T-cell (primary cell): ENCODE measurements at regions of chr16 and their contacts with region 1.

Region 1: DNA sequence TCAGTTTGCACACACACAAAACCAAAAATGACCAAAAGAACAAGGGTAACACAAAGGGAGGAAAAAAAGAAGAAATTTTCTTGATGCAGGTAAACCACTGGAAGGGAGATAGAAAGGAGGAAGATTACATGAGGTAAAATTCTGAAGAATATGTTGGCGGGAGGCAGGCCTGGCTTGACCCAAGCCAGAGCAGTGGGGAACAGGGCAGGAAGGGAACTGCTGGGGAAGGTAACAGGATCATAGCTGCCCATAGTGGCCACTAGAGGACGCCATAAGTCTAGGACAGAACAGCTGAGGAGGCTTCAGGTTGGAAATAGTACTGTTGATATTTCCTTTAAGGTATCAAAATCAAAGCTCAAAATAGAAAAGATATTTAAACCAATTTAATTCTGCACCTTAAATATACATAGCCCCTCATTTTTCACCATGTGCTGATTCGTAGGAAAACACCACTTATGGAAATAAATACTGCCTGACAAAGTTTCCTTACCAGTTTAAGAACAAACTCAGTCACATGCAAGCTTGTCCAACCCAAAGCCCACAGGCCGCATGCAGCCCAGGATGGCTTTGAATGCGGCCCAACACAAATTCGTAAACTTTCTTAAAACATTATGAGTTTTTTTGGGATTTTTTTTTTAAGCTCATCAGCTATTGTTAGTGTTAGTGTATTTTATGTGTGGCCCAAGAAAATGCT is 15.5 kb downstream of the VPS35 start:
- DNase-seq: peak in 30 of 35 experiments; percentile 6 to 78 (median 33)
- ATAC-seq: peak; percentile 73 to 91 (median 81)
- H3K4me3 ChIP-seq: no peak overlapping the region
- H3K4me3 Mint-ChIP-seq: no peak overlapping the region
- H3K27ac ChIP-seq: no peak overlapping the region
- H3K27ac Mint-ChIP-seq: no peak overlapping the region
- H3K4me1 ChIP-seq: no peaks in the 10 kb centered on the region
- H3K4me1 Mint-ChIP-seq: peaks cover 0 to 3% (median 0%) of the 10 kb centered on the region in 3 donors
- H3K27me3 ChIP-seq: no peaks in the 10 kb centered on the region
- H3K27me3 Mint-ChIP-seq: no peaks in the 10 kb centered on the region

Region 2: DNA sequence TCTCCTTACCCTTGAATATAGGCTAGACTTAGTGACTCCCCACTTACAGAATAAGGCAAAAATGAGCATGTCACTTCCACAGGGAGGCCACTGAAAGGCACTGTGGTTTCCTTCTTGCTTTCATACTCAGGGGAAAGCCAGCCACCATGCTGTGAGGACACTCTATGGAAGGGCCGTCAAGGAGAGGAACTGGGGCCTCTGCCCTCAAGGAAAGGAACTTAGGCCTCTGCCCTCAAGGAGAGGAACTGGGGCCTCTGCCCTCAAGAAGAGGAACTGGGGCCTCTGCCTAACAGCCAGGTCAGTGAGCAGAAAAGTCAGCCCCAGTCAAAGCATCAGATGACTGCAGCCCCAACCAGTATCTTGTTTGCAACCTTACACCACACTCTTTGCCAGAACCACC is 14.5 kb before region 1 on chr16:
- CTCF ChIA-PET with region 1: interaction called, 3 to 11 read pairs
- POLR2A ChIA-PET with region 1: interaction called in 1 of 2 experiments, 3 read pairs
- DNase-seq: peak in 10 of 35 experiments; percentile 0 to 40 (median 4)
- ATAC-seq: peak in 3 of 4 experiments; percentile 9 to 43 (median 33)
- H3K4me3 ChIP-seq: no peak overlapping the region
- H3K4me3 Mint-ChIP-seq: no peak overlapping the region
- H3K27ac ChIP-seq: no peak overlapping the region
- H3K27ac Mint-ChIP-seq: peak overlapping the region in 1 of 2 donors; percentile 26
- H3K4me1 ChIP-seq: no peaks in the 10 kb centered on the region
- H3K4me1 Mint-ChIP-seq: peaks cover 0 to 7% (median 0%) of the 10 kb centered on the region in 3 donors
- H3K27me3 ChIP-seq: no peaks in the 10 kb centered on the region
- H3K27me3 Mint-ChIP-seq: no peaks in the 10 kb centered on the region

Region 3: DNA sequence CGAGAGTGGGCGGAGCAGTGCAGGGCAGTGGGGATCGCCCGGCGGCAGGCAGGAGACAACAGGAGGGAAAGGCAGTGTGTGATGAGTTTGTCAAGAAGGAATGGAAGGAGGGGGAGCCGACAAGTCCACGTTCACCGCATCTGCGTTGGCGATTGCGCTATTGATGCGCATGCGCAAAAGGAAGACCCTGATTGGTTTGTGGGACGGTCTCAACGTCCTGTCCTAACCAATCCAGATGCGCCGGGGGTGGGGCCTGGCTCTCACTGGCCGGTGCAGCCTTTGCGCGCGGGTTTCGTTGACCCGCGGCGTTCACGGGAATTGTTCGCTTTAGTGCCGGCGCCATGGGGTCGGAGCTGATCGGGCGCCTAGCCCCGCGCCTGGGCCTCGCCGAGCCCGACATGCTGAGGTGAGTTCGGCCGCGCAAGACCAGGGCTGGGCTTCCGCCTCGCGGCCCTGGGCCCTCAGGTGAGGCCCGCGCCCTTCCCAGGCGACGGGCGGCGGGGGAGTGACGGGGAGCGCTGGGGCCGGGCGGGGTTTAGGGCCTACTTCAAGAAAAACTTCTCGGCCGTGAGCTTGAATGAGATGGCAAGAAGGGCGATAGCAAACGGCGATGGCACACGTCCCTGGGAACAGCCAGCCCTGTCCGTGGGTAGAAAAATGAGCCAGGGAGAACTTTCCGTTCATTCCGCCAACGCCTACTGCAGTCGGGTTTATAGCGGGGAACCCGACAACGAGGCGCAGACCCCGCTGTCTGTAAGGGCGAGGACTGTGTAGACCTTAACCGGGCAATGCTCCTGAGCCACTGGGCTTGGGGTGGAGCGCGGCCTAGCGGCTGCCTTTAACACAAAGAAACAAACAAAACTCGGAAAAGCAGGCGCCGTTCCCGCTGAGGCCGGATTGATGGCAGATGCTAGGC is 16.2 kb after region 1 on chr16 and contains the start of gene ORC6:
- CTCF ChIA-PET with region 1: interaction called, 5 to 13 read pairs
- POLR2A ChIA-PET with region 1: interaction called in 1 of 2 experiments, 3 read pairs
- DNase-seq: peak; percentile 87 to 99 (median 96)
- ATAC-seq: peak; percentile 80 to 82 (median 80)
- H3K4me3 ChIP-seq: peak within 1 kb of the TSS; percentile 87 to 92
- H3K4me3 Mint-ChIP-seq: no peak within 1 kb of the TSS
- H3K27ac ChIP-seq: peak within 1 kb of the TSS; percentile 95
- H3K27ac Mint-ChIP-seq: no peak within 1 kb of the TSS
- H3K4me1 ChIP-seq: peaks cover 19 to 24% of the 10 kb centered on the region in 2 experiments
- H3K4me1 Mint-ChIP-seq: peaks cover 35 to 38% (median 35%) of the 10 kb centered on the region in 3 donors
- H3K27me3 ChIP-seq: no peaks in the 10 kb centered on the region
- H3K27me3 Mint-ChIP-seq: no peaks in the 10 kb centered on the region
- total RNA-seq, gene ORC6: 2.6 to 6.2 (median 3.0) TPM

Region 4: GRCh38 chr16:46908540-46909372 is 235.3 kb after region 1 on chr16:
- CTCF ChIA-PET with region 1: interaction called, 17 to 76 read pairs
- POLR2A ChIA-PET with region 1: interaction called in 1 of 2 experiments, 6 read pairs
- DNase-seq: peak; percentile 9 to 78 (median 45)
- ATAC-seq: peak in 3 of 4 experiments; percentile 39 to 44 (median 42)
- H3K4me3 ChIP-seq: no peak overlapping the region
- H3K4me3 Mint-ChIP-seq: no peak overlapping the region
- H3K27ac ChIP-seq: no peak overlapping the region
- H3K27ac Mint-ChIP-seq: no peak overlapping the region
- H3K4me1 ChIP-seq: no peaks in the 10 kb centered on the region
- H3K4me1 Mint-ChIP-seq: peaks cover 0 to 6% (median 2%) of the 10 kb centered on the region in 3 donors
- H3K27me3 ChIP-seq: no peaks in the 10 kb centered on the region
- H3K27me3 Mint-ChIP-seq: no peaks in the 10 kb centered on the region